ENCODE measurements at regions of chr18 and their contacts with region 1.

Region 1: GRCh38 chr18:7370802-7371201 is 139.9 kb downstream of the LRRC30 start:
- DNase-seq: peak; percentile 81 to 90 (median 87)
- ATAC-seq: peak; percentile 83 to 93 (median 92)
- H3K4me3 ChIP-seq: peak overlapping the region in 2 of 12 donors; percentile 7 to 22
- H3K27ac ChIP-seq: peak overlapping the region in 11 of 12 donors; percentile 76 to 96 (median 88)
- H3K4me1 ChIP-seq: peaks cover 0 to 74% (median 37%) of the 10 kb centered on the region in 12 donors
- H3K27me3 ChIP-seq: no peaks in the 10 kb centered on the region
- CTCF ChIP-seq: no peak
- POLR2A ChIP-seq: no peak

Region 2: DNA sequence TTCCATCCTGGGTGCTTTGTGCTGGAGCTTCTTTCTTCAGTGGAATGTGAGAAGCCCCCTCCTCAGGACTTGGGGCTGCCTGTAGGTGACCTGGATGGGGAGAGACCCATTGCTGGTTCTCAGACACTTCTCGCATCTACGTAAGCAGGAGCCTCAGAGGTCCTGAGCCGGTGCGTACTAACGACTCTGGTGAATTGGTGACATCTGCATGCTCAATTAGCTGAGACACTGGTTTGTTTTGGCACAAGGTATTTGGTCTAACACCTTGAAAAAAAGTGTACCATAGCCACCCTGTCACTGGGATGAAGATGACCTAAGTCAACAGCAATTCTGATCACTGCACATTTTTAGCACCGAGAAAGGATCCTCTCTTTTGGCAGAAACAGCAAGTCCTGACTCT is 82.3 kb before region 1 on chr18:
- intact Hi-C with region 1: loop called in 2 of 10 experiments (anchors 5 kb)
- DNase-seq: no peak
- ATAC-seq: peak in 1 of 4 donors; percentile 62
- H3K4me3 ChIP-seq: no peak overlapping the region
- H3K27ac ChIP-seq: peak overlapping the region in 2 of 12 donors; percentile 8 to 34
- H3K4me1 ChIP-seq: peaks cover 0 to 20% (median 3%) of the 10 kb centered on the region in 12 donors
- H3K27me3 ChIP-seq: no peaks in the 10 kb centered on the region
- CTCF ChIP-seq: no peak
- POLR2A ChIP-seq: no peak

Region 3: GRCh38 chr18:7429831-7430230 is 59.0 kb after region 1 on chr18:
- intact Hi-C with region 1: loop called in 2 of 10 experiments (anchors 5 to 10 kb)
- DNase-seq: no peak
- ATAC-seq: no peak
- H3K4me3 ChIP-seq: no peak overlapping the region
- H3K27ac ChIP-seq: no peak overlapping the region
- H3K4me1 ChIP-seq: no peaks in the 10 kb centered on the region
- H3K27me3 ChIP-seq: no peaks in the 10 kb centered on the region
- CTCF ChIP-seq: no peak
- POLR2A ChIP-seq: no peak

Region 4: DNA sequence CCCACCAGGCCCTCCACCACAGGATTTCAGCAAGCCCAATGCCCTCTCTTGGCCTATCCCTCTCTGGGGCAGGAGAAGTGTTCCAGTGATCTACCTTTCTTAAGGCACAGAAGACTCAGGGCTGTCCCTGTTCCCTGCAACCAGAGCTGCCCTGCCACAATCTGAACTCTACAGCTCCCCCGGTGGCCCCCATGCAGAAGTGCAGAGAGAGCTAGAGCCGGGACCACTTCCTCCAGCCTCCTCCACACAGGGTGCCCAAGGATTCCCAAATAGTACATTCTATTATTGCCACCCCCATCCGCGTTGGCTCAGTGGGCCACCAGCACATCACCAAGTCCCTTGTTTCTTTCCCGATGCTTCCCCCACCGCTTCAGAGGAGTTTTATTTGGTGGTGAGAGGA is 81.5 kb after region 1 on chr18:
- intact Hi-C with region 1: loop called in 1 of 10 experiments (anchors 5 kb)
- DNase-seq: no peak
- ATAC-seq: peak; percentile 63 to 88 (median 78)
- H3K4me3 ChIP-seq: no peak overlapping the region
- H3K27ac ChIP-seq: no peak overlapping the region
- H3K4me1 ChIP-seq: peaks cover 0 to 13% (median 0%) of the 10 kb centered on the region in 12 donors
- H3K27me3 ChIP-seq: no peaks in the 10 kb centered on the region
- CTCF ChIP-seq: peak; percentile 35 to 74 (median 60)
- POLR2A ChIP-seq: no peak

Measured in heart left ventricle (tissue), 16 donors.